Activated B cell treated with CpG ODN at 0.5 μM for 24 hours (primary cell): ENCODE measurements at regions of chr1 and their contacts with region 1.

Region 1: GRCh38 chr1:12124693-12125421 is 41.9 kb upstream of the TNFRSF1B start:
- DNase-seq: peak; percentile 68
- ATAC-seq: peak; percentile 76
- H3K4me3 Mint-ChIP-seq: peak overlapping the region; percentile 50
- H3K27ac Mint-ChIP-seq: peak overlapping the region; percentile 64
- H3K4me1 Mint-ChIP-seq: peaks cover 32% of the 10 kb centered on the region
- H3K27me3 Mint-ChIP-seq: no peaks in the 10 kb centered on the region
- CTCF ChIP-seq: peak; percentile 91

Region 2: GRCh38 chr1:11507309-11507708 is 617.5 kb before region 1 on chr1:
- CTCF ChIA-PET with region 1: no interaction called
- POLR2A ChIA-PET with region 1: no interaction called
- intact Hi-C with region 1: no loop called
- DNase-seq: no peak
- ATAC-seq: no peak
- H3K4me3 Mint-ChIP-seq: no peak overlapping the region
- H3K27ac Mint-ChIP-seq: no peak overlapping the region
- H3K4me1 Mint-ChIP-seq: no peaks in the 10 kb centered on the region
- H3K27me3 Mint-ChIP-seq: peaks cover 6% of the 10 kb centered on the region
- CTCF ChIP-seq: no peak

Region 3: DNA sequence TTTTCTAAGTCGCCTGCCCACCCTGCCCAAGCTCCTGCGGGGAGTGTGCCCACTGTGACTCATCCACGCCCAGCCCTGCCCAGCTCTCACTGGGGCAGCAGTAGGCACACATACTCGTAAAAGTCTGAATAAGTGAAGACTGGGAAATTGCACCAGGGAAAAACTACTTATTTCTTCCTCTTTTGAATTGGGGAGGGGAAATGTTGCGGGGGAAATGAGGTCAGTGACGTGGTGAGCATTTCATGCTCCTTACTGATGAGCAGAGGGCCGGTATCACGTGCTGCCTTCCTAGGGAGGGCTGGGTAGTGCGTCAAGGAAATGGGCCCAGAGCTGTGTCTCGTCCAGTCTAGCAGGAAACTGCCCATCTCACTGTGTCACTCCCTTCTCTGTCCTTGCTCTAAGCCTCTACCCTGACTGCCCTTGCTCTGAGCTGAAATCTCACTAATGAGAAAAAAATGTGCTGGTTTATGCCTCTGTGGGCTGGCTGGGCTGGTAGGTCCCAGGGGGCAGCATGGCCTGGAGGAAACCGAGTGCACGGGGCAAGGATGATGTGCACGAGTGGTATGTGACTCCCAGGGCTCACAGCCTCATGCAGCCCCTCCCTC is 28.4 kb after region 1 on chr1:
- CTCF ChIA-PET with region 1: interaction called, 80 read pairs
- POLR2A ChIA-PET with region 1: interaction called, 13 read pairs
- intact Hi-C with region 1: loop called (anchors 1 kb)
- DNase-seq: peak; percentile 47
- ATAC-seq: peak; percentile 40
- H3K4me3 Mint-ChIP-seq: peak overlapping the region; percentile 52
- H3K27ac Mint-ChIP-seq: peak overlapping the region; percentile 92
- H3K4me1 Mint-ChIP-seq: peaks cover 91% of the 10 kb centered on the region
- H3K27me3 Mint-ChIP-seq: no peaks in the 10 kb centered on the region
- CTCF ChIP-seq: no peak

Region 4: DNA sequence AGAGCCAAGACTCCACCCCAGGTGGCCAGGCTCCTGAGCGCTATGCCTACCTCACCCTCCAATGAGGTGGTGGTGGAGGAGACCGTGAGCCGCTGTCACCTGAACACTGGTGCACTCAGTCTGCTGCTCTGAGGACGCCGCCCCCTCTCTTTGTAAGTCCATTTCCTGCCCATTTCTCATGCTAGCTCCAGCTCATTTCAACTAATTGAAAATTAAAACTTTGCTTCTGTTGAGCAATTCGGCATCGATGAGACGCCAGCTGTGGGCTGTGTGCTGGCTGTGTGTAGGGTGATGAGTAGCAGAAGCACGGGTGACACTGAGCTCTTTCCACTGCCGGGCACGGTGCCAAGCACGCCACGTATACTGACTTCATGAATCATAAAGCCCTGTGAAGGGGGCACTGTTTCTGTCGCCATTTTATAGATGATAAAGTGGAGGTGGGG is 53.2 kb after region 1 on chr1:
- CTCF ChIA-PET with region 1: interaction called, 49 read pairs
- POLR2A ChIA-PET with region 1: interaction called, 4 read pairs
- intact Hi-C with region 1: no loop called
- DNase-seq: no peak
- ATAC-seq: no peak
- H3K4me3 Mint-ChIP-seq: peak overlapping the region; percentile 42
- H3K27ac Mint-ChIP-seq: peak overlapping the region; percentile 18
- H3K4me1 Mint-ChIP-seq: peaks cover 89% of the 10 kb centered on the region
- H3K27me3 Mint-ChIP-seq: no peaks in the 10 kb centered on the region
- CTCF ChIP-seq: no peak

Region 5: DNA sequence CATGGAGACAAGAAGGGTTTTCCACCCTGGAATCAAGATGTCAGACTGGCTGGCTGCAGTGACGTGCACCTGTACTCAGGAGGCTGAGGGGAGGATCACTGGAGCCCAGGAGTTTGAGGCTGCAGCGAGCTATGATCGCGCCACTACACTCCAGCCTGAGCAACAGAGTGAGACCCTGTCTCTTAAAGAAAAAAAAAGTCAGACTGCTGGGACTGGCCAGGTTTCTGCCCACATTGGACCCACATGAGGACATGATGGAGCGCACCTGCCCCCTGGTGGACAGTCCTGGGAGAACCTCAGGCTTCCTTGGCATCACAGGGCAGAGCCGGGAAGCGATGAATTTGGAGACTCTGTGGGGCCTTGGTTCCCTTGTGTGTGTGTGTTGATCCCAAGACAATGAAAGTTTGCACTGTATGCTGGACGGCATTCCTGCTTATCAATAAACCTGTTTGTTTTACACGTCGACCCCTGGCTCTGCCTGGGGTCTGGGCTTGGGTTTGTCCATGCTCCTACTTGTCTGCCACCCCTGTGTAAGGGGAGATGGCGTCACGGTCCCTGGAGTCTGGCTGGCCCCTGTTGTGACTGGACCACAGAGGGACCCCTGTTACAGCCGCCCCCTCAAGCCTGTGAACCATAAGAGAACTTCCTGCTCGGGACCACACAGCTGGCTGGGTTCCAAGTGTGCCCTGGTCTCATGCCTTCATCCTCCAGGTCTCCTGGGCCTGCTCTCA is 84.1 kb after region 1 on chr1:
- CTCF ChIA-PET with region 1: interaction called, 261 read pairs
- POLR2A ChIA-PET with region 1: interaction called, 103 read pairs
- intact Hi-C with region 1: loop called (anchors 1 kb)
- DNase-seq: peak; percentile 81
- ATAC-seq: peak; percentile 71
- H3K4me3 Mint-ChIP-seq: peak overlapping the region; percentile 52
- H3K27ac Mint-ChIP-seq: peak overlapping the region; percentile 86
- H3K4me1 Mint-ChIP-seq: peaks cover 64% of the 10 kb centered on the region
- H3K27me3 Mint-ChIP-seq: no peaks in the 10 kb centered on the region
- CTCF ChIP-seq: peak; percentile 76

Region 6: GRCh38 chr1:12244078-12244477 is 119.2 kb after region 1 on chr1:
- CTCF ChIA-PET with region 1: interaction called, 37 read pairs
- POLR2A ChIA-PET with region 1: no interaction called
- intact Hi-C with region 1: loop called (anchors 1 kb)
- DNase-seq: no peak
- ATAC-seq: no peak
- H3K4me3 Mint-ChIP-seq: no peak overlapping the region
- H3K27ac Mint-ChIP-seq: no peak overlapping the region
- H3K4me1 Mint-ChIP-seq: no peaks in the 10 kb centered on the region
- H3K27me3 Mint-ChIP-seq: no peaks in the 10 kb centered on the region
- CTCF ChIP-seq: no peak

Region 7: DNA sequence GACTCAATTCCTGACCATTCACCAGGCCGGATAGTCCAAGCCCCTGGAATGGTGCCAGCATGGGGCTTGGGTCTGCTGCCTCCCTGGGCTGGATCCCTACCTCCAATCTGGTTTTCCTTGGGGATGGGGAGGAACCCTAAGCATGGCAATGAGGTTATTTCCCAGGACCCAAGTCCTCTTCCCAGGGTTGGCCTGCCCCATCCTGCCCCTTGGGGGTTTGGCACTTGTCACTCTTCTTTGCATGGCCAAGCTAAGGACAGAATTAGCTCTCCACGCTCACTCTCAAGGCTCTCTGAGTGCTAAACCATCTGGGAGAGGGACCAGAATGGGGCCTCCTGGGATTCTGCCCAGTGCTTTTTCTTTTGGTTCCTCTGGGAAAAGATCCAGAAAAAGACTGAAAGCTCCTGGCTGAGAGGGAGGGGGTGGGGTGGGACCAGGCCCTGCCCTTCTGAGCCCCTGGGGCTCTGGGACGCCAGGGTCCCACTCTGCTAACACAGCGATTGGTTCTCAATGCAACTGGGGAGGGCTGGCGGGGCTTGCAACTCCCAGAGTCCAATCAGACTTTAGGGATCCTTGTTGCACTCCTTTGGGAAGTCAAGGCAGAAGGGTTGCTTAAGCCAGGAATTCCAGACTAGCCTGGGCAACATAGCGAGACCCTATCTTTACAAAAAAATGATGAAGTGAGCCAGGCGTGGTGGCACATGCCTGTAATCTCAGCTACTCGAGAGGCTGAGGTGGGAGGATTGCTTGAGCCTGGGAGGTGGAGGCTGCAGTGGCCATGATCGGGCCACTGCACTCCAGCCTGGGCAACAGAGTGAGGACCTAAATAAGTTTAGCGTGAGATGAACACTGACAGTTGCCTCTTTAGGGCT is 440.5 kb after region 1 on chr1:
- CTCF ChIA-PET with region 1: no interaction called
- POLR2A ChIA-PET with region 1: no interaction called
- intact Hi-C with region 1: no loop called
- DNase-seq: no peak
- ATAC-seq: no peak
- H3K4me3 Mint-ChIP-seq: no peak overlapping the region
- H3K27ac Mint-ChIP-seq: no peak overlapping the region
- H3K4me1 Mint-ChIP-seq: no peaks in the 10 kb centered on the region
- H3K27me3 Mint-ChIP-seq: peaks cover 4% of the 10 kb centered on the region
- CTCF ChIP-seq: no peak